AG04449 (cell line): ENCODE measurements at regions of chr9 and their contacts with region 1.

Region 1: GRCh38 chr9:100028201-100028784 is 70.5 kb downstream of the ERP44 start:
- DNase-seq: peak; percentile 17
- H3K4me3 ChIP-seq: no peak overlapping the region
- CTCF ChIP-seq: peak; percentile 83

Region 2: GRCh38 chr9:99833735-99834134 is 194.6 kb before region 1 on chr9:
- CTCF ChIA-PET with region 1: no interaction called
- POLR2A ChIA-PET with region 1: no interaction called
- DNase-seq: no peak
- H3K4me3 ChIP-seq: no peak overlapping the region
- CTCF ChIP-seq: no peak

Region 3: GRCh38 chr9:100011062-100011681 is 17.1 kb before region 1 on chr9:
- CTCF ChIA-PET with region 1: interaction called, 13 read pairs
- POLR2A ChIA-PET with region 1: no interaction called
- DNase-seq: no peak
- H3K4me3 ChIP-seq: no peak overlapping the region
- CTCF ChIP-seq: peak; percentile 11

Region 4: DNA sequence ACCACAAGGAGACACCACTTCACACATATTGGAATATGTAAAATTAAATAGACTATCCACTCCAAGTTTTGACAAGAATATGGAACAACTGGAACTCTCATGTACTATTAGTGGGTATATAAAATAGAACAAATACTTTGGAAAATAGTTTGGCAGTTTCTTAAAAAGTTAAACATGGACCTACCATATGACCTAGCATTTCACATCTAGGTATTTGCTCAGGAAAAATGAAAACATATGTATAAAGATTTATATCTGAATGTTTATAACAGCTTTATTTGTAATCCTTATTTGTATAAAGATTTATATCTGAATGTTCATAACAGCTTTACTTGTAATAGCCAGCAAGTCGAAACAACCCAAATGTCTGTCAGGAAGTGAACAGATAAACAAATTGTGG is 21.3 kb after region 1 on chr9:
- CTCF ChIA-PET with region 1: interaction called, 11 read pairs
- POLR2A ChIA-PET with region 1: no interaction called
- DNase-seq: no peak
- H3K4me3 ChIP-seq: no peak overlapping the region
- CTCF ChIP-seq: no peak

Region 5: GRCh38 chr9:100216178-100216787 is 188.0 kb after region 1 on chr9:
- CTCF ChIA-PET with region 1: interaction called, 50 read pairs
- POLR2A ChIA-PET with region 1: no interaction called
- DNase-seq: no peak
- H3K4me3 ChIP-seq: no peak overlapping the region
- CTCF ChIP-seq: peak; percentile 42

Region 6: DNA sequence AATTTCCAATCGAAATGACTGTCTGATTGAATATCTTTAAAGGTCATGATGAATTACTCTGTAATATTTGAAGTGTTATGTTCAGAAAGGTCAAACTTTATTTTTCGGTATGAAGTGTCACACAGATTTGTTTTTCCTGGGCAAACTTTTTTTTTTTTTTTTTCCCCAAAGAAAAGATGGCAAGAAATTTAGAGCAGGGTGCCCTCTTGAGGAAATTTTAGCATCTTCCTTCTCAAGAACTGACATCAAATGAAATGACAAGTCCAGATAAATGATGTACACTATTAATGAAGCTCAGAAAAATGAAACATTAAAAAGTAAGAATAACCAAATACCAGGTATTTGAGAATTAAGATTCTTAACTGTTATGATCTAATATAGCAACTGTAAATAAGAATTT is 194.4 kb after region 1 on chr9:
- CTCF ChIA-PET with region 1: interaction called, 50 read pairs
- POLR2A ChIA-PET with region 1: no interaction called
- DNase-seq: no peak
- H3K4me3 ChIP-seq: no peak overlapping the region
- CTCF ChIP-seq: peak; percentile 26